ENCODE measurements at regions of chr13 and their contacts with region 1.

Region 1: DNA sequence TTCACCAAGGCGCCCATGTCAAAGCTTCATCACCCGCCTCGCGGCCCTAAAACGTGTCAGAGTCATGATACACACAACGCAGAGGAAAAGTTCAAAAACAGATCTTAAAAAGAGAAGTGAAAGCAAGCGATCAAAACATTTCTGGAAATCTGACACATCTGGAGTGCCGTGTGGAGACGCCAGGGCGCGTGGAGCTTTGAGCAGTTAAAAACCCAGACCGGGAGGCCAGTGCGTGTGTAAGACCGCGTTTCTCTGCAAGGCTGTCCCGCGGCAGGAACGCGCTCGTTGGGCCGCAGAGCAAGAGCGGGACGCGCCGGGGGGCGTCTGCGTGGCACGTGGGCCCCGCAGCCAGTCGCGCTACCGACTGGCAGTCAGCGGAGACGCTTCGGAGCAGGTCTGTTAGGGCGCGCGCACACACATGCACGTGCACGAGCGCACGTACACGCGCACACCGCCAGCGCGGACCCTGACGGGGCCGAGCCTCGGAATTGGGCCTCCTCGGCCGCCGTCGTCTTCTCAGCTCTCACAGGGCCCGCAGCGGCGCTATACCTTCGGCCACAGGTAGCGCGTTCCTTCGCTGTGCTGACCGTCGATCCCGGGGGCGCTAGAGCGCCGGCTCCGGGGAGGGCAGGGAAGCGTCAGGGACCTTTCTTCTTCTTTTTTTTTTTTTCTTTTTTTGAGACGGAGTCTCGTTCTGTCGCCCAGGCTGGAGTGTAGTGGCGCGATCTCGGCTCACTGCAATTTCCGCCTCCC is 35.8 kb downstream of the RNF6 start:
- DNase-seq: peak; percentile 30
- H3K4me3 ChIP-seq: peak overlapping the region; percentile 69
- H3K27me3 ChIP-seq: no peaks in the 10 kb centered on the region; the same call in 1 of the 2 replicates
- CTCF ChIP-seq: peak; percentile 56

Region 2: DNA sequence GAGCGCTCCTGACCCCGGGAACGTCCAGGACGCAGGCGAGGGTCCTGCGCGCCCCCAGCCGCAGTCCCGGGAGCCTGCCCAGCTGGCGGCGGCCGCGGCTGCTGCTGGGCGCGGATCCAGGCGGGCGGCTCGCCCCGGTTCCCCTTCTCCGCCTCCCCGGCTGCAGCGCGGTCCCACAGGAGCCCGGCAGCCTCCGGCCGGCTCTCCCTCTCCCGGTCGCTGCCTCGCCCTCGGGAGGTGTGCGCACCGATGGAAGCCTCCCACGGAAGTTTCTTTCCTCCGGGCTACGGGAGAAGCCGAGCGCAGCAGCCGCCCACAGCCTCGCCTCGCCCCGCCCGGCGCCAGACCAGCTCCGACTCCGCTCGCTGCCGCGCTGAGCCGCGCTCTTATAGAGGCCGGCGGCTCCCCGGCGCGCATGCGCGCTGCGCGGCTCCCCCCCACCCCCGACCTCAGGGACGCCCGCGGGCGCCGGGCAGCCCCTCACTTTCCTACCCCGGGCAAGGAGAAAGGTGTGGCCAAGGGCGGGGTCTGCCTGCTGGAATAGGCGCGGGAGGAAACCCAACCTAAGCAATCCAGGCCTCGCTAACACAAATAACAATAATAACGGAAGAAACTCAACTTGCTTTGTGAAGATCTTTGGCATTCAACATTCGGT is 134.5 kb before region 1 on chr13 and contains the start of gene SHISA2:
- CTCF ChIA-PET with region 1: no interaction called
- POLR2A ChIA-PET with region 1: no interaction called
- DNase-seq: no peak
- H3K4me3 ChIP-seq: peak within 1 kb of the TSS; percentile 33
- H3K27me3 ChIP-seq: peaks cover 25% of the 10 kb centered on the region
- CTCF ChIP-seq: no peak
- polyA plus RNA-seq, gene SHISA2: 0.04 TPM in 1 of 2 replicates, not detected in the other

Region 3: GRCh38 chr13:26168237-26168820 is 18.0 kb before region 1 on chr13:
- CTCF ChIA-PET with region 1: interaction called, 13 read pairs
- POLR2A ChIA-PET with region 1: no interaction called
- DNase-seq: no peak
- H3K4me3 ChIP-seq: no peak overlapping the region
- H3K27me3 ChIP-seq: no peaks in the 10 kb centered on the region
- CTCF ChIP-seq: no peak

Region 4: DNA sequence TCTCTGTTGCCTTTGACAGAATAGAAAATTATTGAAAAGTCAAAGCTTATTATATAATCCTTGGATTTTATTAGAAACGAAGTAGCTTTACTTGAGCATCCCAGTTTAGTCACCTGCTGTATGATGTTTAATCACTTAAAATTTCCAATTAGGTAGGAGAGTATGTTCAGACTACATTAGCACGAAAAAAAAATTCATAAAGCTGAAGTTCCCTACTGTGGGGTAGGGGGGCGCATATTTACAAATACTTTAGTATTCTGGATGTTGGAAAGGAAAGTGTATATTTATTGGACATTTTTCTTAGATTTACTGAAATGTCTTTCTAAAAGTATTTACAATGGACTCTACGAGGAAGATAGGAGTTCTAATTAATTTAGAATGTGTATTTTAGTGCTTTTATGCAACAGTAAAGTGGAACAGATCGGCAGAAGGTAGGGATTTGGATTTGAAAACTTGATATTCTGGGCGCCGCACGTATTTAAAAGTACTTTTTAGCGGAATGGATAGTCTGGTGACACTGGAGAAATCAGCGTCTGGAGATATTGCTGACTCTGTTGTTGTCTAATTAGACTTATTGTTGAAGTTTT is 69.5 kb after region 1 on chr13:
- CTCF ChIA-PET with region 1: interaction called, 10 read pairs
- POLR2A ChIA-PET with region 1: no interaction called
- DNase-seq: no peak
- H3K4me3 ChIP-seq: peak overlapping the region; percentile 78
- H3K27me3 ChIP-seq: peaks cover 2% of the 10 kb centered on the region; the same call in 1 of the 2 replicates
- CTCF ChIP-seq: peak; percentile 31; the same call in 1 of the 2 replicates

Region 5: GRCh38 chr13:26482451-26483197 is 296.3 kb after region 1 on chr13:
- CTCF ChIA-PET with region 1: interaction called, 22 read pairs
- POLR2A ChIA-PET with region 1: no interaction called
- DNase-seq: no peak
- H3K4me3 ChIP-seq: no peak overlapping the region
- H3K27me3 ChIP-seq: no peaks in the 10 kb centered on the region
- CTCF ChIP-seq: peak; percentile 88

Region 6: GRCh38 chr13:26498656-26499591 is 312.6 kb after region 1 on chr13:
- CTCF ChIA-PET with region 1: interaction called, 102 read pairs
- POLR2A ChIA-PET with region 1: interaction called, 3 read pairs
- DNase-seq: no peak
- H3K4me3 ChIP-seq: no peak overlapping the region
- H3K27me3 ChIP-seq: no peaks in the 10 kb centered on the region
- CTCF ChIP-seq: no peak

Region 7: GRCh38 chr13:26698392-26699196 is 512.3 kb after region 1 on chr13:
- CTCF ChIA-PET with region 1: interaction called, 116 read pairs
- POLR2A ChIA-PET with region 1: no interaction called
- DNase-seq: peak; percentile 40
- H3K4me3 ChIP-seq: 0 out of 2 replicates have a peak overlapping the region, but pooled peaks have one; percentile 10
- H3K27me3 ChIP-seq: no peaks in the 10 kb centered on the region
- CTCF ChIP-seq: peak; percentile 96

Region 8: GRCh38 chr13:26719356-26719945 is 533.2 kb after region 1 on chr13:
- CTCF ChIA-PET with region 1: interaction called, 10 read pairs
- POLR2A ChIA-PET with region 1: no interaction called
- DNase-seq: no peak
- H3K4me3 ChIP-seq: no peak overlapping the region
- H3K27me3 ChIP-seq: peaks cover 4% of the 10 kb centered on the region; the same call in 1 of the 2 replicates
- CTCF ChIP-seq: peak; percentile 32